Dorsolateral prefrontal cortex (tissue), 120 donors: ENCODE measurements at regions of chr19 and their contacts with region 1.

Region 1: GRCh38 chr19:58326914-58327726 is at the start of gene ZSCAN22:
- DNase-seq: peak; percentile 97 to 99 (median 98)
- H3K4me3 ChIP-seq: peak within 1 kb of the TSS; percentile 70 to 98 (median 86)
- H3K27ac ChIP-seq: peak within 1 kb of the TSS; percentile 77 to 99 (median 93)
- H3K27me3 ChIP-seq: no peaks in the 10 kb centered on the region
- CTCF ChIP-seq: peak in 29 of 56 donors; percentile 4 to 45 (median 20)
- total RNA-seq, gene ZSCAN22: 2.1 to 6.1 (median 3.3) TPM

Region 2: GRCh38 chr19:58284199-58284598 is 42.9 kb before region 1 on chr19:
- intact Hi-C with region 1: no loop called
- DNase-seq: no peak
- H3K4me3 ChIP-seq: no peak overlapping the region
- H3K27ac ChIP-seq: peak overlapping the region in 1 of 59 donors; percentile 15
- H3K27me3 ChIP-seq: no peaks in the 10 kb centered on the region
- CTCF ChIP-seq: no peak

Region 3: DNA sequence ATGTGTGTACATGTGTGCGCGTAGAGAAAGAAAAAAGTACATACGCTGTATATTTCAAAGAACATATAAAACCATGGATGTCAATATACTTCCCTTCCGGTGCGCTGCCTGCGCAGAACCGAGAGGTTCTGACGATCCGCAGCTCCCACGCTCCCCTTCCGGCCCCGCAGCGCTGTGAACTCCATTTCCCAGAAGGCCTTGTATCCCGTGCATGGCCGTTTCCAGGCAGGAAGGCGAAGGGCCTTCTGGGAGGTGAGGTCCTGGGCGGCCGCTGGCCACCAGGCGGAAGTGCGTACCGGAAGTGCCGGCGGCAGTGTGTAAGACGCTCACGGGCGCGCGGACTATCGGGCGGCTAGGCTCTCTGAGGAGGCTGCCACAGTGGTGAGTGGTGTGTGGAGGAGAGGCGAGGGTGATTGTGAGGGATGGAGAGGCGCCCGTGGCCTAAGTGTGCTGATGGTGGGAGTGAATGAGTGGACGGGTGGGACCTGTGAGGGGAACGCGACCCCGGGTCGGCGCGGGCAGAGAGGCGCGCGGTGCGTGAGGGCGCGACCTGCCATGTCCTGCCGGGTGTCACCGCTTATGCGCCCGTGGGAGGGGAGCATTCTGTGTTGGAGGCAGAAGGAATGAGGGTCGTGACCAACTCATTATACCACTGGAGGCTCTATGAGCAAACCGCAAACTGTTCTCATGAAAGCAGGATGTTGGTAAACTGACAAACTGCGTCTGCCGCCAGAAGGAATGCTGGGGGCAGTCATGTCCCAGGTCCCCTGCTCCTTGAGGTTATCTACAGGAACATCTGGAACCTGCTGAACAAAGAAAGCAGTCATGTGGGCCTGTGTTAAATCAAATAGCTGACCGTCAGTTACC is 21.8 kb before region 1 on chr19 and contains the start of gene ERVK3-1:
- intact Hi-C with region 1: loop called in 1 of 2 experiments (anchors 1 kb)
- DNase-seq: peak; percentile 95 to 98 (median 98)
- H3K4me3 ChIP-seq: peak within 1 kb of the TSS; percentile 73 to 99 (median 91)
- H3K27ac ChIP-seq: peak within 1 kb of the TSS in 58 of 59 donors; percentile 5 to 96 (median 82)
- H3K27me3 ChIP-seq: no peaks in the 10 kb centered on the region
- CTCF ChIP-seq: peak in 49 of 56 donors; percentile 5 to 67 (median 42)
- total RNA-seq, gene ERVK3-1: 26.9 to 56.2 (median 37.1) TPM

Region 4: DNA sequence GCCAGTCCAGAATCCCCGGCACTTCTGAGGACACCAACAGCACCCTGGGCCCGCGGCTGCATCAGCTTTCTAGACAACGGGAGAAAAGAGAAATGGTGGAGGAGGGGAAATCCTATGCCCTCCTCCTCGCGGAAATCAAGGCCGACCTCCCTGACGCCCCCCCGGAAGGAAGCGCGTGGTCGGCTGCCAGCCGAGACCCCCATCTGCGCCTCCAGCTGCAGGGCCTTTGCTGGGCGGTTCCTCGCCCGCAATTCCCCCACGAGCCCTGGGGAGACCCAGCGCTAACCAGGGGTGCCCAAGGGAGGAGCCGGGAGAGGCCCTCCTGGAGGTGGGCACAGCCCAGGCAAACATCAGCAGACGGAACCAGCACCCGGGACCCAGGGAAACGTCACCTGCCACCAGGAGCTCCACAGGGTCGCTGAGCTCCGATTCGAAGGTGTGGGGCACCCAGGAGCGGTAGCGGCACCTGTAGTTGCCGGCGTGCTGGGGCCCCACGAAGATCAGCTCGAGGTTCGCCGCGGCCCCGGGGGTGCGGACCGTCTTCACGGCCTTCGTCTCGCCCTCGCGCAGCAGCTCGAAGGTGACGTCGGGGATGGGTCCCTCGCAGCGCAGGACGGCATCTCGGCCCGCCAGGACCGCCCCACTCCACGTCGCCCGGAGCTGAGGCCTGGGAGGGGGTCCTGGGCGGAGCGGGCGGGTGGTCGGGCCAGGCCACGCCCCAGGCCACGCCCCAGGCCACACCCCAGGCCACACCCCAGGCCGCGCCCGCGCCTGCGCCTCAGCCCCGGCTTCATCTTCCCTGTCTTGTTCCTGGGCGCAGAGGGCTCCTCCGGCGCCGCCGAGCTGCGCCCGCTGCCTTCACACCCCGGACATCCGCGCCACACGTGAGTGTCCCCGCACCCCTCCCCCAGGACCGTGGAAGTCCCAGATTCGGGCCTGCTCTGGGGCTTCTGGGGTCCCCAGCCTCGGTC is 20.1 kb after region 1 on chr19:
- intact Hi-C with region 1: loop called in 1 of 2 experiments (anchors 2 kb)
- DNase-seq: peak in 9 of 10 donors; percentile 66 to 83 (median 75)
- H3K4me3 ChIP-seq: peak overlapping the region; percentile 60 to 90 (median 77)
- H3K27ac ChIP-seq: peak overlapping the region in 56 of 59 donors; percentile 6 to 90 (median 82)
- H3K27me3 ChIP-seq: peaks cover 0 to 23% (median 0%) of the 10 kb centered on the region in 45 donors
- CTCF ChIP-seq: peak in 9 of 56 donors; percentile 4 to 22 (median 17)

Region 5: GRCh38 chr19:58362272-58362994 is 35.3 kb after region 1 on chr19 and contains the start of gene ZNF497:
- intact Hi-C with region 1: loop called (anchors 1 kb)
- DNase-seq: peak; percentile 94 to 98 (median 97)
- H3K4me3 ChIP-seq: peak within 1 kb of the TSS; percentile 59 to 100 (median 84)
- H3K27ac ChIP-seq: peak within 1 kb of the TSS; percentile 51 to 98 (median 92)
- H3K27me3 ChIP-seq: no peaks in the 10 kb centered on the region
- CTCF ChIP-seq: peak in 48 of 56 donors; percentile 22 to 70 (median 52)
- total RNA-seq, gene ZNF497: 1.3 to 6.9 (median 3.7) TPM

Region 6: DNA sequence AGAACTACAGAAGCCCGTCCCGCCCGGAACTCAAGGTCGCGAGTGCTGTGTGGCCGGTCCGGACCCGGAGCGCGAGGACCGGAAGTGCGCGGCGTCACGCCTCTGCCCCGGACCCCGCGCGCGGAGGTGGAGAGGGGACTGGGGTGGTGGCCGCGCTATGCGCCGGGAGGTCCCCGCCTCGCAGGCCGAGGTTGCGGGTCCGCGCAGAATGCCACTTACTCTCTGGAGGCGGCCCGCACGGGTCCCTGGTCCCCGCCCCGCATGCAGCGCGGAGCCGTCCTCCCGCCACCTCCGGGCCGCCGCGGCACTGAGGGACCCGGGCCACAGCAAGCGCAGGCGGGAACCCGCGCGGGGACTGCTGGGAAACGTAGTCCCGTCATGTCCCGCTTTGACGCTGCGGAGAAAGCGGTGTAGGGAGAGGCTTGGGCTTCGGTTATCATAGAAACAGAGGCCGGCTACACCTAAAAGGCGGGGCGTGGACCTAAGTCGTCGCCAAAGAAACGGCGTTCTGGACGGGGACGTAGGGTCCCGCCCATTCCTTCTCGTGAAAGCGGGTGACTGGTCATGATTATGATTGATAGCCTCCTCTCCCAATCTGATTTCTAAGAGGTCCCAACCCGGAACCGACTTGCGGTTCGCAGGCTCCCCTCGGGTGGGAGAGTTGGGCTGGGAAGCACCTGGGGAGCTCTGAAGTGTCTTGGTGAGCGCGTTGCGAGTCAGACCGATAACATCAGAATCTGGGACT is 53.8 kb after region 1 on chr19 and contains the start of gene ZNF837:
- intact Hi-C with region 1: loop called (anchors 2 kb)
- DNase-seq: peak; percentile 96 to 100 (median 99)
- H3K4me3 ChIP-seq: peak within 1 kb of the TSS; percentile 62 to 99 (median 82)
- H3K27ac ChIP-seq: peak within 1 kb of the TSS; percentile 84 to 99 (median 96)
- H3K27me3 ChIP-seq: no peaks in the 10 kb centered on the region
- CTCF ChIP-seq: peak in 22 of 56 donors; percentile 4 to 55 (median 18)
- total RNA-seq, gene ZNF837: 0.27 to 2.9 (median 0.98) TPM in 113 of 120 experiments, not detected in the others

Region 7: DNA sequence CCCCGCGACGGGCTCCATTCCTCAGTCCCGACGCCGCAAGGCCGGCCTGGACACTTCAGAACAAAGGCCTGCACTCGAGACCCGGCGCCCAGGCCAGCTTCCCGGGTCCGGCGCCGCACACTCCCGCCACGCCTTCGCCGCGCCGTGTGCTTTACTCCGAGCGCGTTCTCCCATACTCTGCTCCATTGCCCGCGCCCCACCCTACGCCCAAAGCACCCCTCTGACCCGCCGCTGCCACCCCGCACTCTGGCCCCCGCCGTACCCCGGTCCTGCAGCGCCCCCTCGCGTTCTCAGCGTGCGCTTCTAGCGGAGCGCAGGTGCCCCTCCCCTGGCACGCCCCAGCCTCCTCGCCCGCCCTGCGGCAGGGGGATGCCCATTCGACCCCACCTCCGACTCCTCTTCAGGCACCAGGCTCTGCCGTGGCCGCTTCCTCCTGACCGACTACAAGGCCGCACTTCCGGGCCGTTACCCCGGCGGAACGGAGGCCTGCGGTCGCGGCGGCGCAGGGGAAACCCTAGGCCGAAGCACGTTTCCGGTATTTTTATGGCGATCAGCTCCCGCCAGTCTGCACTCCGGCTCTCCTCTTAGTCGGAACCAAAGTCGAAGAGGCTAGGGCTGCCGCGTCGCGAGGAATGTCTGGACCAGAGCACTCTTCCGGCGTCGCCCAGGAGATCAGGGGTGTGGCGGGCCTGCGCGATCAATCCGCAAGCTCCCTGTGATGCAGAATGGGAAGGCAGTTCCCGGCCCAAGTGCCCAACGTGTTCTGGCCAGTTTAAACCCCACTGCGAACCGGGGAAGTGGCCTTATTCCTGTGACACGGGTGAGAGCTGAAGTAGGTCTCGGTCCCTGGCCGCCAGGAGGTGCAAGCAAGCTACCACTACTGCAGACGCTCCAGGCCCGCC is 192.5 kb after region 1 on chr19 and contains the start of gene ZBTB45:
- intact Hi-C with region 1: loop called in 1 of 2 experiments (anchors 2 kb)
- DNase-seq: peak; percentile 81 to 94 (median 93)
- H3K4me3 ChIP-seq: peak within 1 kb of the TSS; percentile 62 to 98 (median 89)
- H3K27ac ChIP-seq: peak within 1 kb of the TSS; percentile 76 to 98 (median 94)
- H3K27me3 ChIP-seq: no peaks in the 10 kb centered on the region
- CTCF ChIP-seq: peak; percentile 45 to 85 (median 69)
- total RNA-seq, gene ZBTB45: 13.0 to 30.6 (median 19.7) TPM